Transverse colon (tissue), 4 donors: ENCODE measurements at regions of chr4 and their contacts with region 1.

Region 1: GRCh38 chr4:128565565-128566186 is 243.8 kb upstream of the JADE1 start:
- DNase-seq: peak; percentile 54
- H3K4me3 ChIP-seq: no peak overlapping the region
- H3K27ac ChIP-seq: no peak overlapping the region
- H3K4me1 ChIP-seq: peaks cover 4 to 10% (median 5%) of the 10 kb centered on the region in 4 donors
- H3K27me3 ChIP-seq: no peaks in the 10 kb centered on the region
- CTCF ChIP-seq: peak; percentile 54 to 63 (median 57)
- EP300 ChIP-seq: no peak
- POLR2A ChIP-seq: no peak

Region 2: DNA sequence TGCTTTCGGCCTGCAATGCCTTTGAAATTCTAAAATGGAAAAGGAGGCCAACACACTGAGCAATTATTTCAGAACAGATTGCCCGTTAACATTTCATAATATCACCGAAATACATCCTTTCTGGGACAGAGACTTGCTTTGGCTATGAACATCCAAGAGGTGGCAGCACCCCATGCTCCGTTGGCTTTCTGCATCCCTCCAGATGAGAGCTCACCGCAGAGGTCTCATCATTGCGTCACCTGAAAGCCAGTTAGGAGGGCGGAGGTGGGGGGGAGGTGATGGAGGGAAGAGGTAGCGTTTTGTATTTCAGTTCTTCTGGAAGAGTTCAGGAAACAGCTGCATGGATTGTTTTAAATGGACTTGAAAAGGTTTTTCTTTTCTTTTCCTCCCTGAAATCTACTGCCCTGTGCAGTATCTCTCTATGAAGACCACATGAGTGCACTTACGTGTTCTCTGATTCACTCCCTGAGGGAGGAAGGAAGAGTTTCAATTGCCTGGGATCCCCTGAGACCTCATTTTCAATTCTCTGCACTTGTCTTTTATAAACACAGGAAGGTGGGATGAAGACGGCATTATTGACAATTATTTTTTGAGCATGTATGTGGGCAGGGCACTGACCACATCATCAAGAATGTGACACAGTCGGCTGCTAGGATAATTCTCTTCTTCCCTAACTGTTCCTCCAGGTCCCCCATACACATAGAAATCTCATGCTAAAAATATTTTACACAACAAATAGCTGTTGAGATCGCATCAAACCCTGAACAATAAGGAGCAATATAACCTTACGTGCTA is 111.2 kb before region 1 on chr4:
- in situ Hi-C with region 1: loop called in 1 of 4 experiments (anchors 25 kb)
- intact Hi-C with region 1: loop called (anchors 10 kb)
- DNase-seq: peak; percentile 73
- H3K4me3 ChIP-seq: no peak overlapping the region
- H3K27ac ChIP-seq: no peak overlapping the region
- H3K4me1 ChIP-seq: peaks cover 0 to 10% (median 0%) of the 10 kb centered on the region in 4 donors
- H3K27me3 ChIP-seq: no peaks in the 10 kb centered on the region
- CTCF ChIP-seq: peak; percentile 66 to 72 (median 69)
- EP300 ChIP-seq: no peak
- POLR2A ChIP-seq: no peak

Region 3: GRCh38 chr4:128622077-128622476 is 56.4 kb after region 1 on chr4:
- in situ Hi-C with region 1: no loop called
- intact Hi-C with region 1: no loop called
- DNase-seq: no peak
- H3K4me3 ChIP-seq: no peak overlapping the region
- H3K27ac ChIP-seq: no peak overlapping the region
- H3K4me1 ChIP-seq: peaks cover 0 to 12% (median 4%) of the 10 kb centered on the region in 4 donors
- H3K27me3 ChIP-seq: no peaks in the 10 kb centered on the region
- CTCF ChIP-seq: no peak
- EP300 ChIP-seq: no peak
- POLR2A ChIP-seq: no peak

Region 4: DNA sequence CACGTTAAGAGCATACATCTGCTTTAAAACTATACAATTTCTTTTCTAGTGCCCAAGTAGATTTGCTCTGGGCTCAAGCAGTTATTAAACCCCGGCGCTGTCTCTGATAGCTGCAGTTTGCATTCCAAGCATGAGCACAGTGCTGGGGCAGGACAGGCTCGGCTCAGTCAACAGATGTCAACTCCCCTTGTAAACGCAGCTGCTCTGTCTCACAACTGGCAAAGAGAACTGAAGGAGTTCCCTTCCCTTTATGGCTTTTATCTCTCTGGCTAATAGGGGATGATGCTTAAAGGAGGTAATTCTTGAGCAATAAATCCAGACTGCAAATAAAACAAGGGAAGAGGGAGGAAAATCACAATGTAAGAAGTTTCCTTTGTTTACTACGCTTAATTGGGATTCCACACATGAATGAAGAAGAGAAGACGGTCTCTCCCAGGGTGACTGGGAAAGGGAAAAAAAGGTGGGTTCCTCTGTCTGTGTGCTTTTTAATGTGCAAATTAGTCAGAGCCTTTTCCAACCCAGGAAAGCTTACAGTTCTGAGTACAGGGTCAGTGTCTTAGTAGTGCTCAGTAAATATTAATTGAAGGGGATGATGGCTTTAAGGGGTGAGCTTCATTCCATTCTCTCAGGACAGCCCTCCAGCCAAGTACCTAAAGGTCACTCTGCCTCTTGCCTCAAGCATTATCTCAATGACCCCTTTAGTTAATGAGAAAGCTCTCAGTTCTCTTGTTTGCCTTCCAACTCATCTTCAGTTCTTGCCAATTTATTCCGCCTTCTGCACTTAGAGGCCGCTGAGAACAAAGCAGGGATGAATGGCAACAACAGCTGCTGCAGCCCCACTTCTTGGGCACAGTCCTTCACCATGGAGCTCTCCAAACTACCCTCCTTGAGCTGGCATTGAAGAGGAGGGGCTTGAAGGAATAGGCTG is 88.1 kb after region 1 on chr4:
- in situ Hi-C with region 1: no loop called
- intact Hi-C with region 1: loop called (anchors 10 kb)
- DNase-seq: peak; percentile 61
- H3K4me3 ChIP-seq: no peak overlapping the region
- H3K27ac ChIP-seq: peak overlapping the region; percentile 29 to 76 (median 70)
- H3K4me1 ChIP-seq: peaks cover 9 to 45% (median 38%) of the 10 kb centered on the region in 4 donors
- H3K27me3 ChIP-seq: no peaks in the 10 kb centered on the region
- CTCF ChIP-seq: no peak
- EP300 ChIP-seq: no peak
- POLR2A ChIP-seq: no peak

Region 5: GRCh38 chr4:129093191-129093920 is 527.7 kb after region 1 on chr4 and contains the start of gene SCLT1:
- in situ Hi-C with region 1: loop called in 1 of 4 experiments (anchors 25 kb)
- intact Hi-C with region 1: loop called (anchors 10 kb)
- DNase-seq: peak; percentile 100
- H3K4me3 ChIP-seq: peak within 1 kb of the TSS; percentile 64 to 78 (median 68)
- H3K27ac ChIP-seq: peak within 1 kb of the TSS; percentile 96 to 97 (median 96)
- H3K4me1 ChIP-seq: peaks cover 7 to 49% (median 14%) of the 10 kb centered on the region in 4 donors
- H3K27me3 ChIP-seq: no peaks in the 10 kb centered on the region
- CTCF ChIP-seq: no peak
- EP300 ChIP-seq: no peak
- POLR2A ChIP-seq: peak; percentile 95
- total RNA-seq, gene SCLT1: 10.1 to 29.9 (median 14.3) TPM